CD8-positive, alpha-beta T cell (primary cell): ENCODE measurements at regions of chr20 and their contacts with region 1.

Region 1: GRCh38 chr20:2873010-2873746 is at the start of gene PTPRA:
- DNase-seq: peak; percentile 83 to 95 (median 91)
- ATAC-seq: peak; percentile 87
- H3K4me3 ChIP-seq: peak within 1 kb of the TSS; percentile 69 to 85
- H3K4me3 Mint-ChIP-seq: peak within 1 kb of the TSS; percentile 93
- H3K27ac ChIP-seq: peak within 1 kb of the TSS; percentile 49 to 61
- H3K27ac Mint-ChIP-seq: peak within 1 kb of the TSS; percentile 93
- H3K4me1 ChIP-seq: peaks cover 31% of the 10 kb centered on the region
- H3K4me1 Mint-ChIP-seq: peaks cover 39% of the 10 kb centered on the region
- H3K27me3 ChIP-seq: no peaks in the 10 kb centered on the region
- H3K27me3 Mint-ChIP-seq: no peaks in the 10 kb centered on the region
- CTCF ChIP-seq: no peak
- total RNA-seq, gene PTPRA: 68.2 to 71.9 TPM

Region 2: GRCh38 chr20:2508631-2509467 is 364.3 kb before region 1 on chr20 and contains the start of gene ZNF343:
- CTCF ChIA-PET with region 1: no interaction called
- POLR2A ChIA-PET with region 1: no interaction called
- intact Hi-C with region 1: loop called in 1 of 2 experiments (anchors 5 kb)
- DNase-seq: peak; percentile 52 to 89 (median 75)
- ATAC-seq: peak; percentile 93
- H3K4me3 ChIP-seq: peak within 1 kb of the TSS; percentile 85 to 95
- H3K4me3 Mint-ChIP-seq: peak within 1 kb of the TSS; percentile 96
- H3K27ac ChIP-seq: peak within 1 kb of the TSS; percentile 30 to 80
- H3K27ac Mint-ChIP-seq: peak within 1 kb of the TSS; percentile 94
- H3K4me1 ChIP-seq: peaks cover 13% of the 10 kb centered on the region
- H3K4me1 Mint-ChIP-seq: peaks cover 29% of the 10 kb centered on the region
- H3K27me3 ChIP-seq: no peaks in the 10 kb centered on the region
- H3K27me3 Mint-ChIP-seq: peaks cover 8% of the 10 kb centered on the region
- CTCF ChIP-seq: no peak
- total RNA-seq, gene ZNF343: 3.9 to 4.9 TPM

Region 3: DNA sequence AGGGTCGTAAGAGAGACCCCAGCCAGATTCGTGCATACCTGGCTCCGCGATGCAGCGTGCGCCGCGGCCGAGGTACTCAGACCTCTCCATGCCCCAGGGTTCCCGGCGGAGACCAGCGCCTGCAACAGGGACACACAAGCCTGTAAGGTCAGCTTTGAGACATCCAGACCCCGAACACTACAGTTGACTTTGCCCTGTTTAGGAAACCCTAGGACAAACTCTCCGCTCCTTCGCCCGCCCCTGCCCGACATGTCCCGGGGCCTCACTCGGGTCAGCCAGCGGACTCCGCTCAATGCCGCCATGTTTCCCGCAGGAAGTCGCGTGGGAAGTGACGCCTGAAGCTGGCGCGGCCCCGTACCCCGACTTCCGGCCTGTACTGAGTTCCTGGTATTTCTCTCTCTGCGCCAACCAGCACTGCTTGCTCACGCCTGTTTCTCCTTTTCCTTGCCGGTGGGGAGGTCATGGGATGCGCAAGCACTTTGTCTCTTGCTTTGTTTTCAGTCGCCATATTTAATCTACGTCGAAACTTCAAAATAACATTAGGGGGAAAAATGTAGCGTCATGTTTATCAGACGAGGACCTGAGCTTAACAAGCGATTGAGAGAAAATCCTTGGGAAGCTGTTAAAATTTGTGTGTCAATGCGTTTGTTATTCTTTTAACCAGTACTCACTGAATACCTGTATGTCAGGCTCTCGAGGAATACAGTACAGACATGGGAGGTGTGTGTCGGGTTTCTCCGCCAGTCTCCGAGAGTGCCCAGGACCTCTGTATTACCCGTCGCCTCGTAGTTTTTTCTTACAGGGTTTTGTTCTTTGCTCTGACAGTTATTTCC is 209.1 kb before region 1 on chr20 and contains the start of gene IDH3B:
- CTCF ChIA-PET with region 1: no interaction called
- POLR2A ChIA-PET with region 1: interaction called, 3 read pairs
- intact Hi-C with region 1: loop called in 1 of 2 experiments (anchors 1 kb)
- DNase-seq: peak; percentile 80 to 95 (median 93)
- ATAC-seq: peak; percentile 98
- H3K4me3 ChIP-seq: peak within 1 kb of the TSS; percentile 74 to 83
- H3K4me3 Mint-ChIP-seq: peak within 1 kb of the TSS; percentile 94
- H3K27ac ChIP-seq: peak within 1 kb of the TSS; percentile 82 to 95
- H3K27ac Mint-ChIP-seq: peak within 1 kb of the TSS; percentile 97
- H3K4me1 ChIP-seq: peaks cover 12% of the 10 kb centered on the region
- H3K4me1 Mint-ChIP-seq: peaks cover 20% of the 10 kb centered on the region
- H3K27me3 ChIP-seq: no peaks in the 10 kb centered on the region
- H3K27me3 Mint-ChIP-seq: peaks cover 7% of the 10 kb centered on the region
- CTCF ChIP-seq: no peak
- total RNA-seq, gene IDH3B: 174 to 184 TPM

Region 4: GRCh38 chr20:2780948-2781347 is 92.2 kb before region 1 on chr20:
- CTCF ChIA-PET with region 1: no interaction called
- POLR2A ChIA-PET with region 1: no interaction called
- intact Hi-C with region 1: no loop called
- DNase-seq: no peak
- ATAC-seq: no peak
- H3K4me3 ChIP-seq: no peak overlapping the region
- H3K4me3 Mint-ChIP-seq: no peak overlapping the region
- H3K27ac ChIP-seq: no peak overlapping the region
- H3K27ac Mint-ChIP-seq: no peak overlapping the region
- H3K4me1 ChIP-seq: no peaks in the 10 kb centered on the region
- H3K4me1 Mint-ChIP-seq: no peaks in the 10 kb centered on the region
- H3K27me3 ChIP-seq: no peaks in the 10 kb centered on the region
- H3K27me3 Mint-ChIP-seq: peaks cover 17% of the 10 kb centered on the region
- CTCF ChIP-seq: no peak

Region 5: DNA sequence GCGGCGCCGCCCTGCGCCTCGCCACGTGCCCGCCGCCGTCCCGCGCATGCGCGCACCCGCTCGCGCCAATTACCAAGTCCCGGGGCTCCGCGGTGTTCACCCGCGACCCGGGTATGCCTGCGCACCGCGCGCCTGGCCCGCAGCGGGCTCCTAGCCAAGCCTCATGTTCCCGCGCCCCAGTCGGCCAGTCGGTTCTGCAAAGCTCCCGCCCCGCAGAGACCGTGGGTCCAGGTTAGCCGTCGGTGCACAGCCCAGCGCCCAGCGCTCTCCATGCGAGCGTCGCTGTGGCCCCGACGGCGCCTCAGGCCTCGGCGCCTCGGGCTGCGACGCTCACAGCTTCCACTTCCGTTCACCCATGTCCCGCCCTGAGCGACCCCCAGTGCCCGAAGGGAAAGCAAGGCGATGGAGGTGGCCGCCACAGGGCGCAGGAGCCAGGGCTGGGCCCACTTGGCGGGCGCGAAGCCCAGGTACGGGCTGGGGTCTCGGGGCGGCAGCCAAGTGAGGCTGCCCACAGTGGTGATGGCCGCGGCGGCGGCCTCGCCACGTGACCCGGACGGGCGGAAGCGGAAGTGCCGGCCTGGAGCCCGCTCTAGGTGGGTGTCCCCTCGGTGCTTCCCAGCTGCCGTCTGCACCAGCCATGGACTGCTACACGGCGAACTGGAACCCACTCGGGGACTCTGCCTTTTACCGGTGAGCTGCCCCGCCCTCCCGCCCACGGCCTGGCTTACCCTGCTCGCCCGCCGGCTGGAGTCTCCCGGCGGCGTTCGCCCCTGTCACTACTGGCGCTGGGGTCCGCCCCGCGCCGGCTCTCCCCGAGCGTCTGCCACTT is 32.8 kb before region 1 on chr20 and contains the starts of genes PCED1A and VPS16:
- CTCF ChIA-PET with region 1: no interaction called
- POLR2A ChIA-PET with region 1: interaction called, 14 read pairs
- intact Hi-C with region 1: loop called (anchors 1 kb)
- DNase-seq: peak; percentile 78 to 95 (median 89)
- ATAC-seq: peak; percentile 92
- H3K4me3 ChIP-seq: peak within 1 kb of the TSS; percentile 88 to 97
- H3K4me3 Mint-ChIP-seq: peak within 1 kb of the TSS; percentile 82
- H3K27ac ChIP-seq: peak within 1 kb of the TSS; percentile 85 to 88
- H3K27ac Mint-ChIP-seq: peak within 1 kb of the TSS; percentile 89
- H3K4me1 ChIP-seq: peaks cover 22% of the 10 kb centered on the region
- H3K4me1 Mint-ChIP-seq: peaks cover 41% of the 10 kb centered on the region
- H3K27me3 ChIP-seq: no peaks in the 10 kb centered on the region
- H3K27me3 Mint-ChIP-seq: no peaks in the 10 kb centered on the region
- CTCF ChIP-seq: no peak
- total RNA-seq, gene PCED1A: 58.7 to 62.2 TPM
- total RNA-seq, gene VPS16: 40.7 to 41.1 TPM

Region 6: GRCh38 chr20:3045816-3046676 is 172.9 kb after region 1 on chr20 and contains the start of gene MRPS26:
- CTCF ChIA-PET with region 1: no interaction called
- POLR2A ChIA-PET with region 1: no interaction called
- intact Hi-C with region 1: loop called (anchors 2 kb)
- DNase-seq: peak; percentile 48 to 87 (median 76)
- ATAC-seq: peak; percentile 85
- H3K4me3 ChIP-seq: peak within 1 kb of the TSS; percentile 72 to 95
- H3K4me3 Mint-ChIP-seq: peak within 1 kb of the TSS; percentile 82
- H3K27ac ChIP-seq: peak within 1 kb of the TSS; percentile 66 to 71
- H3K27ac Mint-ChIP-seq: peak within 1 kb of the TSS; percentile 76
- H3K4me1 ChIP-seq: peaks cover 15% of the 10 kb centered on the region
- H3K4me1 Mint-ChIP-seq: peaks cover 19% of the 10 kb centered on the region
- H3K27me3 ChIP-seq: no peaks in the 10 kb centered on the region
- H3K27me3 Mint-ChIP-seq: no peaks in the 10 kb centered on the region
- CTCF ChIP-seq: no peak
- total RNA-seq, gene MRPS26: 16.5 to 19.5 TPM

Region 7: DNA sequence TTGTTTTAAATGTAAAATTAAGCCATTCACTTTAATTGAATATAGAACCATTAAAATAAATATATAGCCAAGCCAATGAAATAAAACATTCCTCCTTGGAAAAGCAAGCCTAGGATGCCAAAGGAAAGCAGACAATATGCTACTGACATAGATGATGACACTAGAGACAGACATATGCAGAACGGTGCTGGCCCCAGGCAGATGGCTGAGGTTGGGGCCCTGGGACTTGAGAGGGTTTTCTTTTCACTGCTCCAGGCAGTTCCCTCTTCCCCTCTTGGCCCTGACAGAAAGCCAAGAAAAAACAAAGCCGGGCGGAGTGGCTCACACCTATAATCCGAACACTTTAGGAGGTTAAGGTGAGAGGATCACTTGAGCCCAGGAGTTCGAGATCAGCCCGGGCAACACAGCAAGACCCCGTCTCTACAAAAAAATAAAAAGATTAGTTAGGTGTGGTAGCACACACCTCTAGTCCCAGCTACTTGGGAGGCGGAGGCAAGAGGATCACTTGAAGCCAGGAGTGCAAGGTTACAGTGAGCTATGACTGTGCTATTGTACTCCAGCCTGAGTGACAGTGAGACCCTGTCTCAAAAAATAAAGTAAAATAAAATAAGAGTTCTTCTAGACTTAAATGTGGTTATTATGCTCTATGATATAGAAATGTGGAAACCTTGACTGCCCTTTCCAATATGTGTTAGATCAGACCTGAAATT is 255.3 kb after region 1 on chr20:
- CTCF ChIA-PET with region 1: no interaction called
- POLR2A ChIA-PET with region 1: no interaction called
- intact Hi-C with region 1: no loop called
- DNase-seq: no peak
- ATAC-seq: no peak
- H3K4me3 ChIP-seq: no peak overlapping the region
- H3K4me3 Mint-ChIP-seq: no peak overlapping the region
- H3K27ac ChIP-seq: no peak overlapping the region
- H3K27ac Mint-ChIP-seq: no peak overlapping the region
- H3K4me1 ChIP-seq: peaks cover 4% of the 10 kb centered on the region
- H3K4me1 Mint-ChIP-seq: peaks cover 6% of the 10 kb centered on the region
- H3K27me3 ChIP-seq: no peaks in the 10 kb centered on the region
- H3K27me3 Mint-ChIP-seq: no peaks in the 10 kb centered on the region
- CTCF ChIP-seq: no peak

Region 8: GRCh38 chr20:3204124-3204822 is 331.1 kb after region 1 on chr20 and contains the start of gene DDRGK1:
- CTCF ChIA-PET with region 1: no interaction called
- POLR2A ChIA-PET with region 1: no interaction called
- intact Hi-C with region 1: loop called in 1 of 2 experiments (anchors 10 kb)
- DNase-seq: peak; percentile 82 to 95 (median 91)
- ATAC-seq: peak; percentile 87
- H3K4me3 ChIP-seq: peak within 1 kb of the TSS; percentile 87 to 98
- H3K4me3 Mint-ChIP-seq: peak within 1 kb of the TSS; percentile 95
- H3K27ac ChIP-seq: peak within 1 kb of the TSS; percentile 76 to 82
- H3K27ac Mint-ChIP-seq: peak within 1 kb of the TSS; percentile 97
- H3K4me1 ChIP-seq: peaks cover 26% of the 10 kb centered on the region
- H3K4me1 Mint-ChIP-seq: peaks cover 27% of the 10 kb centered on the region
- H3K27me3 ChIP-seq: no peaks in the 10 kb centered on the region
- H3K27me3 Mint-ChIP-seq: no peaks in the 10 kb centered on the region
- CTCF ChIP-seq: no peak
- total RNA-seq, gene DDRGK1: 40.6 to 43.5 TPM

Region 9: GRCh38 chr20:3470627-3471396 is 597.6 kb after region 1 on chr20 and contains the start of gene ATRN:
- CTCF ChIA-PET with region 1: no interaction called
- POLR2A ChIA-PET with region 1: no interaction called
- intact Hi-C with region 1: loop called in 1 of 2 experiments (anchors 2 kb)
- DNase-seq: peak; percentile 70 to 94 (median 89)
- ATAC-seq: peak; percentile 92
- H3K4me3 ChIP-seq: peak within 1 kb of the TSS; percentile 68 to 86
- H3K4me3 Mint-ChIP-seq: peak within 1 kb of the TSS; percentile 92
- H3K27ac ChIP-seq: peak within 1 kb of the TSS; percentile 47 to 72
- H3K27ac Mint-ChIP-seq: peak within 1 kb of the TSS; percentile 83
- H3K4me1 ChIP-seq: peaks cover 33% of the 10 kb centered on the region
- H3K4me1 Mint-ChIP-seq: peaks cover 35% of the 10 kb centered on the region
- H3K27me3 ChIP-seq: no peaks in the 10 kb centered on the region
- H3K27me3 Mint-ChIP-seq: no peaks in the 10 kb centered on the region
- CTCF ChIP-seq: no peak
- total RNA-seq, gene ATRN: 8.4 to 8.7 TPM